ENCODE measurements at regions of chr11 and their contacts with region 1.

Region 1: GRCh38 chr11:32821517-32821916 is 8.2 kb upstream of the PRRG4 start:
- DNase-seq: peak; percentile 91
- ATAC-seq: peak; percentile 65
- H3K4me3 ChIP-seq: peak overlapping the region; percentile 56; the same call in 1 of the 2 replicates
- H3K27ac ChIP-seq: peak overlapping the region; percentile 95
- H3K4me1 ChIP-seq: peaks cover 63% of the 10 kb centered on the region
- H3K27me3 ChIP-seq: no peaks in the 10 kb centered on the region
- CTCF ChIP-seq: no peak

Region 2: GRCh38 chr11:32893343-32894148 is 72.0 kb after region 1 on chr11:
- CTCF ChIA-PET with region 1: no interaction called
- POLR2A ChIA-PET with region 1: no interaction called
- intact Hi-C with region 1: loop called (anchors 2 kb)
- DNase-seq: peak; percentile 32
- ATAC-seq: peak; percentile 37
- H3K4me3 ChIP-seq: peak overlapping the region; percentile 80
- H3K27ac ChIP-seq: peak overlapping the region; percentile 64
- H3K4me1 ChIP-seq: peaks cover 28% of the 10 kb centered on the region
- H3K27me3 ChIP-seq: no peaks in the 10 kb centered on the region
- CTCF ChIP-seq: peak; percentile 57